Activated T-helper 2 cell treated with anti-CD3 and anti-CD28 coated beads, Interferon-gamma antibody, Interleukin-2, Interleukin-4, amounts not matched to agents 10 μg/mL and 5 μg/mL and 100 μg/mL, durations not matched to agents 14 hours and 24 hours and 36 hours (primary cell): ENCODE measurements at regions of chr4 and their contacts with region 1.

Region 1: DNA sequence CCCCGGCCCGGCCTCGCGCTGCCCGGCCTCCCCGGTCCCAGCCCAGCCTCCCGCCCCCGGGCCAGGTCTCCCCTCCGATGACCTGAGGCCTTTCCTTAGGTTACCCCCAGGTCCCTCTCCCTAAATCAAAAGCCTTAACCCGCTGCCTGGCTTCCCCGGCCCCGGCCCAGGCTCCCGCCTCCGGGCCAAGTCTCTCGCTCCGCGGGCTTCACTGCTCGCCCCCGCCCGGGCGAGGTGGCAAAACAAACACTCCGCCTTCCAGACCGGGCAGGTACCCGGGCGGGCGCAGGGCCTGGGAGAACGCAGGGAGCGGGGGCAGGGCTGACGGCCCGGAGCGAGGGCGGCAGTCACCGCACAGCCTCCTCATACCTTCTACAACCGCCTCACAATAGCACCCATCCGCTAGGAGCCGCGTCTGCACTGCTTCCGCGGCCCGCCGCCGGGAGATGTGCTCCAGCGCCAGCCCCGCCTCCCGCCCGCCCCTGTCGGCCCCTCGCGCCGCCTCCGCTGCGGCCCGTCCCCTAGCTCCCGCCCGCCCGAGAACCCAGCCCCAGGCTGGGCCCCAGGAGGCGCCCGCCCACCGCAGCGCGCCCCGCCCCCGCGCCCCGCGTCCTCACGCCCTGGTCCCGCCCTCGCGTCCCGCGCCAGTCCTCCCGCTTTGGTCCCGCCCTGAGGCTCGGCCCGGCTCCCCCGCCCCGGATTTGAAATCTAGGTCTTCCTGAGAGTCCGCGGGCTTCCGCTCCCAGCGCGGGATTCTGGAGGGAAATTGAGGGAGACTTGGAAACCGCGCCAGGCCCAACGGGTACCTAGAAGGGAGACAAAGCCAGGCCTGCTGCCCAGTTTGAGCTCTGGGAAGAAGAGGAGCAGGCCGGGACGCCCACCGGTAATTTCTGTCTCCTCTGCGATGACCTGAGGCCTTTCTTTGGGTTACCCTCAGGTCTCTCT is at the starts of genes CASP3 and PRIMPOL:
- DNase-seq: peak; percentile 96
- H3K4me3 Mint-ChIP-seq: peak within 1 kb of the TSS; percentile 95
- H3K27ac Mint-ChIP-seq: peak within 1 kb of the TSS; percentile 88
- H3K4me1 Mint-ChIP-seq: peaks cover 52% of the 10 kb centered on the region
- H3K27me3 Mint-ChIP-seq: no peaks in the 10 kb centered on the region
- total RNA-seq, gene CASP3: 90.9 and 94.1 TPM in 2 replicates
- total RNA-seq, gene PRIMPOL: 16.2 and 17.6 TPM in 2 replicates

Region 2: DNA sequence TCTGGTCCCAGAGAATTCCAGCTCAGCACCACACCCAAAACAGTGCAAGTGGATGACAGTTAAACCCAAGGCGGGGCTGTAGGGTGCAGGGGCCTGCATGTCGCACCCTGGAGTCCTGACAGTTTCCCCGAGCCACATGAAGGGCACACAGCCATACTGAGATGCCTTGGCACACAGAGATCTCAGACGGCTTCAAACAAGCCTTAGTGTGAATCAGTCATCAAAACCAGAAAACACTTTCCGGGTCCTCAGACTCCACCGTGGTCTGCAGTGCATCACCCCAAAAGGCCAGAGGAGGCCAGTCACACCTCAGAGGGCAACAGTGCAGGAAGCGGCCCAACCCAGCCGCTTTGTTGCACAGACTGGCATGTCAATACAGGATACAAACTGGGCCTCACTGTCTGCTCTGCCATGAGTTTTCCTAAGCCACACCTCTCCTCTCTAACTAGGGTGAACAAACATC is 367.0 kb before region 1 on chr4:
- intact Hi-C with region 1: loop called (anchors 1 kb)
- DNase-seq: peak; percentile 52
- H3K4me3 Mint-ChIP-seq: no peak overlapping the region
- H3K27ac Mint-ChIP-seq: peak overlapping the region; percentile 92
- H3K4me1 Mint-ChIP-seq: peaks cover 63% of the 10 kb centered on the region
- H3K27me3 Mint-ChIP-seq: no peaks in the 10 kb centered on the region

Region 3: DNA sequence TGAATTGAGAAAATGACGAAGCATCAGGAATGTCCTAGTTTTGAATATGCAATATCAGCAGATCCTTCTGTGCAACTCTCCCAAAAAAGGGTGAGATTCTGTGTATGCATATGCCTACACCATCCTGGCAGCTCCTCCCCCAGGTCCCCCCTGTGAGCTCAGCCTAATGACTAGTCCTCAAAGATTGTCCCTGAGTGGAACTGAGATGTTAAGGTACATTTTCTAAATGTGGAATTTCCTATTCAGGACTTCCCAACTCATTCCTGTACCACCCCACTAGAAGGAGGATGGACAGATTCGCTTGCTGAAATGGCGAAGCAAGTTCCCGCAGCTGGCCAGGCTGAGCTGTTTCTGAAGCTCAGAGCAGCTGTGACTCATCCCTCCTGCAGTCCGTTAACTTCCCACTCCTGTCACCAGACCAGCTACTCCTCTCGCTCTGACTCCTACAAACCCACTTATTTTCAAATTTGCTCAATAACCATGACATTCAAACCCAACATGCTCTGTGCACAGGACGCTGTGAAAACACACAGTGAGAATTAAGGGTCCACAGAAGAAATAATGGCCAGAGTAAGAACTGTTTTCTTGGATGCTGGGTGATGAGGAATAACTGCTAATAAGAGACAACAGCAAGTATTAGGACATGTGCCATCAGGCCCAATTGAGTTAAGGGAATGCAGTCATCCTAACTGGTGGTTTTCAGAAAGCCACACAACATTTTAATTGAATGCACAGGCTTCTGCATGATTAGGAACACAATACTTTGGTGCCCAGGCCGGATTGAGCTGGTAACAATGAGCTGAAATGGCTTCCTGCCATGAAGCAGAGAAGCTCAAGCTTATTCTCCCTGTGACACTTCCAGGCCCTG is 134.9 kb before region 1 on chr4:
- intact Hi-C with region 1: loop called (anchors 1 kb)
- DNase-seq: peak; percentile 53
- H3K4me3 Mint-ChIP-seq: peak overlapping the region; percentile 66
- H3K27ac Mint-ChIP-seq: peak overlapping the region; percentile 90
- H3K4me1 Mint-ChIP-seq: peaks cover 51% of the 10 kb centered on the region
- H3K27me3 Mint-ChIP-seq: no peaks in the 10 kb centered on the region

Region 4: GRCh38 chr4:184627765-184628480 is 21.4 kb before region 1 on chr4:
- intact Hi-C with region 1: no loop called
- DNase-seq: no peak
- H3K4me3 Mint-ChIP-seq: no peak overlapping the region
- H3K27ac Mint-ChIP-seq: no peak overlapping the region
- H3K4me1 Mint-ChIP-seq: peaks cover 41% of the 10 kb centered on the region
- H3K27me3 Mint-ChIP-seq: no peaks in the 10 kb centered on the region

Region 5: DNA sequence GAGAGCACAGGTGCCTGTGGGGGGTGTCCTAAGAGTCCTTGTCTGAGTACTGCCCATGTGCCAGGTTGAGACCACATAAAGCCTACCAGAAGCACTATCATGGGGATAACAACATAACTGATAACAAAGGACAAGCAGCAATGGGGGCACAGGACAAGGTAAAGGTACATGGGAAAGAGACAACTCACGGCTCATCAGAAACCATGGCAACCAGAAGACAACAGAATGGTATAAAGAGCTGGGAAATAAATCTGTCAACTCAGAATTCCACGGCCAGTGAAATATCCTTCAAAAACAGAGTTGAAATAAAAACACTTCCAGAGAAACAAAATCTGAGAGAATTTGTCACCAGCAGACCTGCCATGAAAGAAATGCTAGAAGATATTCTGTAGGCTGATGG is 64.6 kb after region 1 on chr4:
- intact Hi-C with region 1: loop called (anchors 5 kb)
- DNase-seq: no peak
- H3K4me3 Mint-ChIP-seq: no peak overlapping the region
- H3K27ac Mint-ChIP-seq: no peak overlapping the region
- H3K4me1 Mint-ChIP-seq: peaks cover 23% of the 10 kb centered on the region
- H3K27me3 Mint-ChIP-seq: no peaks in the 10 kb centered on the region